Ovary (tissue), 10 donors: ENCODE measurements at regions of chr16 and their contacts with region 1.

Region 1: DNA sequence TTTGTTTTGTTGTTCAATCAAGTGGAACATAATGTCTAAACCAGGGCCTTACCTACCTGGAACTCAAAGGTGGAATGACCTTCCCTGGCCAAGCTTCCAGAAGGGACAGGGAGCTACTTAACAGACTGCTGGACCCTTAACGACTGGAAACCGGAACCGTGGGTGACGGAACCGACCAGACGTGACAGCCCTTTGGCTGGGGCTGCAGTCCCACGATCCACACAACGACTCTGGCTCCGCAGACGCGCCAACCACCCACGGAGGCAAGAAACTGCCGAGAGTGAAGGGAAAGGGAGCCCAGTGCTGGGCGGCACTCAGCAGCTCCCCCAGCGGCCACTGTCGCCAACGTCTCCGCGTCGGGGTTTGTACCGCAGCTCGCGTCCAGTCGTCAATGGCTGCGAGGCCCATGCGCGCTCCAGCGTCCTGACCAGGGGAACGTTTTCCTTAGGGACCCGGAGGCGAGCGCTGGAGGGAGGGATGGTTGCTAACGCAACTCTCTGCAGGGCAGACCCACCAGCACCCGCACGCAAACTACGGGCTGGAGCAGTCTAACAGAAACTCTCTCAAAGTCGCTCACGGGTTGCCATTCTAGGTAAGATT is 5.5 kb upstream of the KIF22 start:
- DNase-seq: peak; percentile 71 to 86 (median 78)
- H3K4me3 ChIP-seq: peak overlapping the region; percentile 22
- H3K27ac ChIP-seq: no peak overlapping the region
- H3K4me1 ChIP-seq: peaks cover 7% of the 10 kb centered on the region
- H3K27me3 ChIP-seq: no peaks in the 10 kb centered on the region
- CTCF ChIP-seq: peak; percentile 72 to 77 (median 74)
- EP300 ChIP-seq: no peak
- POLR2A ChIP-seq: no peak

Region 2: DNA sequence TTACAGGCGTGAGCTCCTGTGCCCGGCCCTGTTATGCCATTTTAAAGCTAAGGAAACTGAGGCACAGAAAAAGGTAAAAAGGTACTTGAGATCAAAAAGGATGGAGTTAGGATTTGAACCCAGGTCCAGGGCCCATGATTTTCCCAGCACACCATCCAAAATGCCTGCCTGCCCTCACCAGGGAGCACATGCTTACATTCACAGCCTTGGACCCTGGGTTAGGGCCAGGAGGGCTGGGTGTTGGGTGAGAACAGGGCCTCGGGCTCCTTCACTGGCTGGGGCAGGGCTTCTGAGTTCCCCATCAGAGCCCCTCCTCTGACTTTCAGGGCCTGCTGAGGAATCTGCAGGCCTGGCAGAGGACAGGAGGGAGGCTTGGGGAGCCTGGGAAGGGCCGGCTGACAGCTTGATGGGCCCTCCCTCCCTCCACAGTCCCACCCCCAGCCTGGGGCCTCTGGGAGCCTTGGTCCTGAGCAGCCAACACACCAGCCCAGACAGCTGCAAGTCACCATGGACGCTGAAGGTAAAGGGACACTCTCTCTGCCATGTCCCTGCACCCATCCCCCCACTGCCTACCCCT is 106.2 kb before region 1 on chr16 and contains the start of gene QPRT:
- intact Hi-C with region 1: no loop called
- DNase-seq: peak; percentile 57 to 71 (median 66)
- H3K4me3 ChIP-seq: peak within 1 kb of the TSS; percentile 37
- H3K27ac ChIP-seq: peak within 1 kb of the TSS; percentile 28 to 60
- H3K4me1 ChIP-seq: peaks cover 5% of the 10 kb centered on the region
- H3K27me3 ChIP-seq: no peaks in the 10 kb centered on the region
- CTCF ChIP-seq: no peak
- EP300 ChIP-seq: no peak
- POLR2A ChIP-seq: no peak
- total RNA-seq, gene QPRT: 31.8 to 67.9 (median 43.1) TPM

Region 3: DNA sequence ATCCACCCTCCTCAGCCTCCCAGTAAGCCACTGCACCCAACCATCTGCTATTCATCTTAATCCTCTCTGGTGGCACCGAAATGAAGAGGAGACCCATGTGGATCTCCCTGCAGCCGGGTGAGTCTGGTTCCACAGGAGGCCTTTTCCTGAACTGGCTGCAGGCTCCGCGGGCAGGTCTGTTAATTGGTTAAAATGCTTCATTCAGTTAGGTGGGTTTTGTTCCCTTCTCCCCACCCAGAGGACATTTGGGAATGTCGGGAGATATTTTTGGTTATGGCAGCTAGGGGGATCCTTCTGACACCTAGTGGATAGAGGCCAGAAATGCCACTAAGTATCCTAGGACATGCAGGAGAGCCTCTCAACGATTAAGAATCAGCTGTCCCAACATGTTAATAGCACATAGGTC is 55.9 kb before region 1 on chr16:
- intact Hi-C with region 1: loop called in 2 of 4 experiments (anchors 10 kb)
- DNase-seq: peak in 2 of 5 donors; percentile 13 to 23
- H3K4me3 ChIP-seq: no peak overlapping the region
- H3K27ac ChIP-seq: no peak overlapping the region
- H3K4me1 ChIP-seq: no peaks in the 10 kb centered on the region
- H3K27me3 ChIP-seq: no peaks in the 10 kb centered on the region
- CTCF ChIP-seq: peak in 2 of 3 donors; percentile 50 to 64
- EP300 ChIP-seq: no peak
- POLR2A ChIP-seq: no peak

Region 4: DNA sequence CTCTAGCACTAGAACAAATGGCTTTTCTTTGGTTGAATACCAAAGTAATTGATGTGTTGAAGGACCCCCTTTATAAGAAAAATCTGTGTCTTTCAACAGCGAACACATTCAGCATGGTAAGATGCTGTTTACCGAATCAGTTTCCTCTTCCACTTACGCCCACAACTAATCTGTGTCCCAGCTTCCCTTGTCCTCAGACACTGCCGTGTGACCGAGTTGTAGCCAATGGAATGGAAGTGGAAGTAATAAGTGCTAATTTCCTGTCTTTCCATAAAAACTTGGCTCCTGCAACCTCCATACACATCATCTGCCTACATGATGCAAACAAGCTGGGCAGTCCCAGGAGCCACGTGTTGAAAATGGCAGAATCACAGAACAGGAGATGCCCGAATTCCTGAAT is 67.7 kb after region 1 on chr16:
- intact Hi-C with region 1: no loop called
- DNase-seq: no peak
- H3K4me3 ChIP-seq: no peak overlapping the region
- H3K27ac ChIP-seq: peak overlapping the region in 1 of 2 donors; percentile 37
- H3K4me1 ChIP-seq: peaks cover 5% of the 10 kb centered on the region
- H3K27me3 ChIP-seq: no peaks in the 10 kb centered on the region
- CTCF ChIP-seq: no peak
- EP300 ChIP-seq: no peak
- POLR2A ChIP-seq: no peak